ENCODE measurements at regions of chr17 and their contacts with region 1.

Region 1: GRCh38 chr17:75896415-75897159 is at the start of gene TRIM65:
- DNase-seq: peak; percentile 86
- ATAC-seq: peak; percentile 87
- H3K4me3 Mint-ChIP-seq: peak within 1 kb of the TSS; percentile 82
- H3K27ac Mint-ChIP-seq: peak within 1 kb of the TSS; percentile 84
- H3K4me1 Mint-ChIP-seq: peaks cover 23% of the 10 kb centered on the region
- H3K27me3 Mint-ChIP-seq: no peaks in the 10 kb centered on the region
- total RNA-seq, gene TRIM65: 33.3 to 33.6 TPM

Region 2: GRCh38 chr17:75845049-75845860 is 51.3 kb before region 1 on chr17:
- CTCF ChIA-PET with region 1: interaction called, 14 read pairs
- DNase-seq: peak; percentile 79
- ATAC-seq: peak; percentile 52
- H3K4me3 Mint-ChIP-seq: peak overlapping the region; percentile 39
- H3K27ac Mint-ChIP-seq: peak overlapping the region; percentile 61
- H3K4me1 Mint-ChIP-seq: peaks cover 27% of the 10 kb centered on the region
- H3K27me3 Mint-ChIP-seq: no peaks in the 10 kb centered on the region

Region 3: GRCh38 chr17:75864448-75864871 is 32.1 kb before region 1 on chr17:
- CTCF ChIA-PET with region 1: interaction called, 46 read pairs
- DNase-seq: peak; percentile 90
- ATAC-seq: peak; percentile 85
- H3K4me3 Mint-ChIP-seq: peak overlapping the region; percentile 44
- H3K27ac Mint-ChIP-seq: peak overlapping the region; percentile 94
- H3K4me1 Mint-ChIP-seq: peaks cover 22% of the 10 kb centered on the region
- H3K27me3 Mint-ChIP-seq: no peaks in the 10 kb centered on the region

Region 4: DNA sequence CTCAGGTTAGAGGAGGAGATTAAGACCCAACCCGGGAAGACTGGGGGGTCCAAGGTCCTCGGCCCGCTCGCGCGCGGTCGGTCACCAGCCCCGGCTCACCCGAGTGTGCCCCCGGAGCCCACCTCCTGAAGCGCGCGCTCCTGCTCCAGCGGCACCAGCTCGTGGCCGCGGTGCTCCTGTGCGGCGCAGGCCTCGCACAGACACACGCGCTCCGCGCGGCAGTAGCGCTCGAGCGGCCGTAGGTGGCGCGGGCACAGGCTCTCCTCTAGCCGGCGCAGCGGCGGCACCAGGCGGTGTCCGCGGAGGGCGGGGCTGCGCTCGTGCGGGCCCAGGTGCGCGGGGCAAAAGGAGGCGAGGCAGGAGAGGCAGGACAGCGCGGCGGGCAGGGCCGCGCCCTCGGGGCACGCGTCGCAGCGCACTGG is 18.8 kb before region 1 on chr17:
- CTCF ChIA-PET with region 1: interaction called, 101 read pairs
- DNase-seq: peak; percentile 82
- ATAC-seq: peak; percentile 82
- H3K4me3 Mint-ChIP-seq: peak overlapping the region; percentile 88
- H3K27ac Mint-ChIP-seq: peak overlapping the region; percentile 91
- H3K4me1 Mint-ChIP-seq: peaks cover 37% of the 10 kb centered on the region
- H3K27me3 Mint-ChIP-seq: peaks cover 28% of the 10 kb centered on the region

Measured in activated CD8-positive, alpha-beta memory T cell treated with anti-CD3 and anti-CD28 coated beads, Interleukin-2, amount 10 ng/mL, durations not matched to agents 7 days and 5 days (primary cell).